AG04450 (cell line): ENCODE measurements at regions of chr6 and their contacts with region 1.

Region 1: GRCh38 chr6:21149470-21149869 is 444.1 kb upstream of the SOX4 start:
- DNase-seq: no peak
- H3K4me3 ChIP-seq: no peak overlapping the region
- H3K27ac ChIP-seq: no peak overlapping the region
- H3K27me3 ChIP-seq: no peaks in the 10 kb centered on the region
- CTCF ChIP-seq: no peak

Region 2: DNA sequence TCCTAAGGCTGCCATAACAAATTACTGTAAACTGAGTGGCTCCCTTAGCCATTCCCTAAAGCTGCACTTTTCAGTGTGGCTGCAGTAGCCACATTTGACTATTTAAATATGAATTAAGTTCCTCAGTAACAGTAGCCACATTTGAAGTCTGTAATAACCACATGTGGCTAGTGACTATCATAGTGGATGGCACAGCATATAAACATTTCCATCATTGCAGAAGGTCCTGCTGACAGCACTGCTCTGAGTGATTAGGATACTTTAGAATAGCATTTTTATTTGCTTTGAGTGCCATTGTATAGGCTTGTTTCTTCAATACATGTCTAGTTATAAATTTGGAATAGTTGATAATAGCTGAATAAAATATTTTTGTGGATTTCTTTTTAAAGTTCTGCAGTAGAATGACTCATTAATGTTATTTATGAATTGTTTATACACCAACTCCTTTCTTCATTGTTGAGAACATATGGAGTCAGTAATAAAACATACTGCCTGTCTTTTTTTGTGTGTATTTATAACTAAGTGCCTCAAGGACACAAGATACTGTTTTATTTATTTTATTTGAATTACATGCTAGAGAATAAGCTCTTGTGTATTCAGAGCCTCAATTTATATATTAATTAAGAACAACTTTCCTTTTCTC is 398.1 kb before region 1 on chr6:
- CTCF ChIA-PET with region 1: interaction called, 14 read pairs
- POLR2A ChIA-PET with region 1: no interaction called
- DNase-seq: no peak
- H3K4me3 ChIP-seq: no peak overlapping the region
- H3K27ac ChIP-seq: no peak overlapping the region
- H3K27me3 ChIP-seq: no peaks in the 10 kb centered on the region
- CTCF ChIP-seq: no peak